ENCODE measurements at regions of chr12 and their contacts with region 1.

Region 1: DNA sequence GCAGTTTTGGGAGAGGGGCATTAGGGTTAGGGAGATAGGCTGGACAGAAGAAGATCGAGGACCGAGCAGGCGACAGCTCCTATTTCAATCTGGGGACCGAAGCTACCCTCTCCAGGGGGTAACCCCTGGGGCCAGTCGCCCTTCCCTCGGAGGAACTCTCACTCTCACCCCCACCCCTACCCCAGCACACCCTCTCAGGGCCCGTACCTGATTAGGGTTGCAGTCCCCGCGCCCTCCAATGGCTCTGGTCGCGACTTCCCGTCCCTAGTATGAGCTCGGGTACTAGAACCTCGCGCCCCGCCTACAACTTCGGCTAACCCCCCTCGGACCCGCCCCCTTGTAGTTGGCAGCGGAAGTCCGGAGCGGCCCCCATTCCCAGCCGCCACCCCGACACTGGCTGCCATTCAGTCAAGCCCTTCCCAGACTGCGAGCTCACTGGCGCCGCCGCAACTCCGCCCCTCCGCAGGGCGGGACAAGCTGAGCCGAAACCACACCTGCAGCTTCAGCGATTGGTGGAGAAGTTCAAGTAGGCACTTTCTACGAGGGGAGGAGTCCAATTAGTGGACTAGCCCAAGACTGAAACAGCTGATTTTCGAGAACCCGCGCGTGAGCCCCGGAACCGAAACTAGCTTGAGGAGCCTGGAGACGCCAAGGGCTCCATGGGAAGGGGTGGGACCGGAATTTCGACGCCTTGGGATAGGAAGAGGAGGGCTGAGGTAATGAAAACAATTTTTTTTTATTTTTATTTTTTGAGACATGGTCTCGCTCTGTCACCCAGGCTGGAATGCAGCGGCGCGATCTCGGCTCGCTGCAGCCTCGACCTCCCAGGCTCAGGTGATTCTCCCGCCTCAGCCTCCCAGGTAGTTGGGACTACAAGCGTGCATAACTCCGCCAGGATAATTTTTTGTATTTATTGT is at the start of gene STAT2:
- DNase-seq: peak; percentile 98 to 100 (median 99)
- ATAC-seq: peak; percentile 93
- H3K4me3 ChIP-seq: peak within 1 kb of the TSS; percentile 78 to 81
- H3K4me3 Mint-ChIP-seq: peak within 1 kb of the TSS; percentile 95
- H3K27ac ChIP-seq: peak within 1 kb of the TSS; percentile 76 to 78
- H3K27ac Mint-ChIP-seq: peak within 1 kb of the TSS; percentile 95
- H3K4me1 ChIP-seq: peaks cover 23% of the 10 kb centered on the region
- H3K4me1 Mint-ChIP-seq: peaks cover 34% of the 10 kb centered on the region
- H3K27me3 ChIP-seq: no peaks in the 10 kb centered on the region
- H3K27me3 Mint-ChIP-seq: no peaks in the 10 kb centered on the region
- CTCF ChIP-seq: no peak
- total RNA-seq, gene STAT2: 71.8 to 81.9 TPM

Region 2: DNA sequence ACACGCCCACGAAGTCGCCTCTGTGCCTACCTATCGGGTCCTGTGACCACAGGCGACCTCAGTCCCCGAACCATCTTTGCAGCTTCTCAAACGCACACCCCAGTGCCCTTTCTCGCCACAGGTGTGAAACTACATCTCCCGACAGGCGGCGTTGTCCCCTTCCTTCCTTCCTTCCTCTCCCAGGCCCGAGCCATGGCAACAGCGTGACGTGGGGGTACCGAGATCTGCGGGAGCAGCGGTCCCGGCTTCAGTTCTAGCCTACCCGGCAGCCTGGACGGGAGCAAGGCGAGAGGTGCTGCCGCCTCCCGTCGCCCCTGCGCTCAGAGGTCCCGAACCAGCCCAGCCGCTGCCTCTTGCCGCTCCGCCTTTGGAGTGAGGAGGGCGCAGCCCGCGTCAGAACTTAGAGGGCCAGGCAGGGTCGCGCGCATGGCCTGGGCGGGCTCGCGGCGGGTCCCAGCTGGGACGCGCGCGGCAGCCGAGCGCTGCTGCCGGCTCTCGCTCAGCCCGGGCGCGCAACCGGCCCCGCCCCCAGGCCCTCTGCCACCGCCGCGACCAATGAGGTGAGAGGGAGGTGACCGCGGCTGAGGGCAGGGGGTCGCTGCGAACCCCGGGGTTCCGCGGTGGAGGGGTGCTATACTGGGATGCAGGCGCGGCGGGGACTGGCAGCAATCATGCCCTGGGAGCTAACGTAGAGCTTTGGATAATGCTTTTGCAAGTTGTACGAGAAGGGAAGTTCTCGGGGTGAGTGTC is 93.2 kb before region 1 on chr12 and contains the start of gene COQ10A:
- CTCF ChIA-PET with region 1: no interaction called
- POLR2A ChIA-PET with region 1: no interaction called
- intact Hi-C with region 1: loop called in 1 of 2 experiments (anchors 1 kb)
- DNase-seq: peak; percentile 77 to 95 (median 92)
- ATAC-seq: peak; percentile 87
- H3K4me3 ChIP-seq: peak within 1 kb of the TSS; percentile 87 to 89
- H3K4me3 Mint-ChIP-seq: peak within 1 kb of the TSS; percentile 92
- H3K27ac ChIP-seq: peak within 1 kb of the TSS; percentile 95 to 98
- H3K27ac Mint-ChIP-seq: peak within 1 kb of the TSS; percentile 92
- H3K4me1 ChIP-seq: peaks cover 12% of the 10 kb centered on the region
- H3K4me1 Mint-ChIP-seq: peaks cover 20% of the 10 kb centered on the region
- H3K27me3 ChIP-seq: no peaks in the 10 kb centered on the region
- H3K27me3 Mint-ChIP-seq: no peaks in the 10 kb centered on the region
- CTCF ChIP-seq: peak; percentile 66
- total RNA-seq, gene COQ10A: 29.5 to 38.8 TPM

Region 3: GRCh38 chr12:56315622-56316473 is 44.3 kb before region 1 on chr12 and contains the start of gene CNPY2:
- CTCF ChIA-PET with region 1: interaction called, 14 read pairs
- POLR2A ChIA-PET with region 1: interaction called, 35 read pairs
- intact Hi-C with region 1: loop called (anchors 1 kb)
- DNase-seq: peak; percentile 89 to 97 (median 95)
- ATAC-seq: peak; percentile 92
- H3K4me3 ChIP-seq: peak within 1 kb of the TSS; percentile 86 to 99
- H3K4me3 Mint-ChIP-seq: peak within 1 kb of the TSS; percentile 99
- H3K27ac ChIP-seq: peak within 1 kb of the TSS; percentile 70 to 98
- H3K27ac Mint-ChIP-seq: peak within 1 kb of the TSS; percentile 98
- H3K4me1 ChIP-seq: peaks cover 10% of the 10 kb centered on the region
- H3K4me1 Mint-ChIP-seq: peaks cover 16% of the 10 kb centered on the region
- H3K27me3 ChIP-seq: no peaks in the 10 kb centered on the region
- H3K27me3 Mint-ChIP-seq: no peaks in the 10 kb centered on the region
- CTCF ChIP-seq: no peak
- total RNA-seq, gene CNPY2: 23.5 to 33.9 TPM

Region 4: DNA sequence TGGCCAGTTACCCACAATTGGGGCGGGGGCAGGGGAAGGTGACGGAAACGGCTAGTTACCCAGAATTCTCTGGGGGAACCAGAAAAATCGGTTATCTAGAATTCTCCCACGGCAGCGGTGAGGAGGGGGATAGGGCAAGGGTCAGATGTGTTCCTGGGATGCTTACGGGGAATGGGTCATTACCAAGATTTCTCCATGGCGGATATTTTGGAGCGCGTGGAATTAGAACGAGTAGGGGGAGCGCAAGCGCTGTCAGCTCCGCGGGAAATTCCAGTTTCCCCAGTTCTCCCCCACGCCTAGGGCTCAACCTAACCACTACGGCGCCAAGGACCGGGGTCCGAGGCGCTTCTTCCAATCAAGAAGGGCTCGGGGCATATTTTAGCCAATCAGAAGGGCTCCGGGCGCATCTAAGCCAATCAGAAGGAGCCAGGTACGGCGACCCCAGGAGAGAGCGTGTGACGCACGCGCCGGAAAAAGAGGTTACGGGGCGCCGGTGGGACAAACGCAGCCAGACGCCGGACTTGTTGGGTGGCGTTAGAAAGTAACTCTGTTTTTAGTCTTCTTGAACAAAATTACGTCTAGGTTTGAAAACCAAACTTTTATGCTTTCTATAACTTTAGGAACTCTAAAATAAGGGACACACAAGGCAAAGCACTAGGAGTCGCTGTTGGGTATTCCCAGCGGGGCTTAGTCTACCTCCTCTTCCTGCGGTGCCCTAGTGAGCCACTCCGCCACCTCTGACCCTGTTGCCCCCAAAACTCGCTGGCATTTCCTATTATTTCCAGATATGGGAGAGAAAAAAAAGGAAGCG is 26.2 kb before region 1 on chr12 and contains the start of gene PAN2:
- CTCF ChIA-PET with region 1: interaction called, 10 read pairs
- POLR2A ChIA-PET with region 1: interaction called, 84 read pairs
- intact Hi-C with region 1: loop called (anchors 1 kb)
- DNase-seq: peak; percentile 87 to 98 (median 93)
- ATAC-seq: peak; percentile 80
- H3K4me3 ChIP-seq: peak within 1 kb of the TSS; percentile 47 to 85
- H3K4me3 Mint-ChIP-seq: peak within 1 kb of the TSS; percentile 96
- H3K27ac ChIP-seq: peak within 1 kb of the TSS; percentile 97 to 100
- H3K27ac Mint-ChIP-seq: peak within 1 kb of the TSS; percentile 100
- H3K4me1 ChIP-seq: peaks cover 27% of the 10 kb centered on the region
- H3K4me1 Mint-ChIP-seq: peaks cover 53% of the 10 kb centered on the region
- H3K27me3 ChIP-seq: no peaks in the 10 kb centered on the region
- H3K27me3 Mint-ChIP-seq: no peaks in the 10 kb centered on the region
- CTCF ChIP-seq: peak; percentile 64
- total RNA-seq, gene PAN2: 111 to 113 TPM

Region 5: GRCh38 chr12:56448860-56449621 is 88.9 kb after region 1 on chr12 and contains the start of gene TIMELESS:
- CTCF ChIA-PET with region 1: no interaction called
- POLR2A ChIA-PET with region 1: interaction called, 13 read pairs
- intact Hi-C with region 1: loop called (anchors 1 kb)
- DNase-seq: peak; percentile 63 to 93 (median 83)
- ATAC-seq: peak; percentile 95
- H3K4me3 ChIP-seq: peak within 1 kb of the TSS; percentile 84 to 94
- H3K4me3 Mint-ChIP-seq: peak within 1 kb of the TSS; percentile 91
- H3K27ac ChIP-seq: peak within 1 kb of the TSS; percentile 34 to 68
- H3K27ac Mint-ChIP-seq: peak within 1 kb of the TSS; percentile 86
- H3K4me1 ChIP-seq: peaks cover 7% of the 10 kb centered on the region
- H3K4me1 Mint-ChIP-seq: peaks cover 14% of the 10 kb centered on the region
- H3K27me3 ChIP-seq: no peaks in the 10 kb centered on the region
- H3K27me3 Mint-ChIP-seq: no peaks in the 10 kb centered on the region
- CTCF ChIP-seq: no peak
- total RNA-seq, gene TIMELESS: 1.7 to 2.2 TPM

Region 6: GRCh38 chr12:56581418-56582145 is 221.5 kb after region 1 on chr12:
- CTCF ChIA-PET with region 1: no interaction called
- POLR2A ChIA-PET with region 1: no interaction called
- intact Hi-C with region 1: no loop called
- DNase-seq: peak in 6 of 9 experiments; percentile 13 to 78 (median 50)
- ATAC-seq: peak; percentile 92
- H3K4me3 ChIP-seq: no peak overlapping the region
- H3K4me3 Mint-ChIP-seq: peak overlapping the region; percentile 37
- H3K27ac ChIP-seq: peak overlapping the region in 1 of 2 experiments; percentile 58
- H3K27ac Mint-ChIP-seq: peak overlapping the region; percentile 58
- H3K4me1 ChIP-seq: peaks cover 19% of the 10 kb centered on the region
- H3K4me1 Mint-ChIP-seq: peaks cover 16% of the 10 kb centered on the region
- H3K27me3 ChIP-seq: no peaks in the 10 kb centered on the region
- H3K27me3 Mint-ChIP-seq: no peaks in the 10 kb centered on the region
- CTCF ChIP-seq: no peak

Measured in CD8-positive, alpha-beta T cell (primary cell).